Dorsolateral prefrontal cortex (tissue), 120 donors: ENCODE measurements at regions of chr1 and their contacts with region 1.

Region 1: DNA sequence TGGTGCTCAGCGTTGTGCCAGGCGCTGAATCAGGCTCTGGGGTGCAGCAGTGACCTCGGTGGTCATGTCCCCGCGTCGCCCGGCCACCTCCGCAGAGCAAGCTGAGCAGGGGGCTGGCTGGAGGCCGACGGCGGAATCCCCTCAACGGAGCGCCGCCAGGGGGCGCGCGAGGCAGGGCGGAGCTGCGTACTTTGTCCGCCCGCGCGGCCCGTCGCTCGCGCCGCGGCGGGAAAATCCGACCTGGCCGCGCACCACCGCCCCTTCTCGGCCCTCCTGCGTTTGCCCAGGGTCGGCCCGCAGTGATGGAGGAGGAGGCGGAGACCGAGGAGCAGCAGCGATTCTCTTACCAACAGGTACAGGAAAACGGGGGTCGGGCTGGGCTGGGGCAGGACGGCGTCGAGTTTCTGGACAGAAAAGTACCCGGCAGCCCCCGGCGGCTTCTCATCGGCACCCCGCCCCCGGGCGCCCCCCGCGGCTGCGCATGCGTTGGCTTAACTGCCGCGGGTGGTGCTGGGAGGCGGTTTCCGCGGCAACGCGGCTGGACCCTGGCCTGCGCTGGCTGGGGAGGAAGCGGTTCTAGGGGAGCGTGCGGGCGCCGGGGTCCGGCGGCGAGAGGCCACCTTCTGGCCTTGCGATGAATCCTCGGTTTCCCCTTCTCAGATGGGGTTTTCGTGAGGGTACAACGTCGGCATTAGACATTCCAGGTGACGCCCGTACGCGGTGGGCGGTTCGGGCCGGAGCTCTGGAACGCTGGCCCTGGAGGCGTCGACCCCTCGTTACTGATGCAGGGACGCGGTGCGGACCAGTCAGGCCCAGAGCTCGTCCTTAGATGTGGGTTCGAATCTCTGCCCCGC is at the start of gene CENPS:
- DNase-seq: peak; percentile 48 to 89 (median 79)
- H3K4me3 ChIP-seq: peak within 1 kb of the TSS; percentile 60 to 98 (median 87)
- H3K27ac ChIP-seq: peak within 1 kb of the TSS in 57 of 59 donors; percentile 26 to 90 (median 72)
- H3K27me3 ChIP-seq: no peaks in the 10 kb centered on the region
- CTCF ChIP-seq: peak; percentile 86 to 100 (median 96)
- total RNA-seq, gene CENPS: 7.2 to 24.1 (median 14.9) TPM

Region 2: DNA sequence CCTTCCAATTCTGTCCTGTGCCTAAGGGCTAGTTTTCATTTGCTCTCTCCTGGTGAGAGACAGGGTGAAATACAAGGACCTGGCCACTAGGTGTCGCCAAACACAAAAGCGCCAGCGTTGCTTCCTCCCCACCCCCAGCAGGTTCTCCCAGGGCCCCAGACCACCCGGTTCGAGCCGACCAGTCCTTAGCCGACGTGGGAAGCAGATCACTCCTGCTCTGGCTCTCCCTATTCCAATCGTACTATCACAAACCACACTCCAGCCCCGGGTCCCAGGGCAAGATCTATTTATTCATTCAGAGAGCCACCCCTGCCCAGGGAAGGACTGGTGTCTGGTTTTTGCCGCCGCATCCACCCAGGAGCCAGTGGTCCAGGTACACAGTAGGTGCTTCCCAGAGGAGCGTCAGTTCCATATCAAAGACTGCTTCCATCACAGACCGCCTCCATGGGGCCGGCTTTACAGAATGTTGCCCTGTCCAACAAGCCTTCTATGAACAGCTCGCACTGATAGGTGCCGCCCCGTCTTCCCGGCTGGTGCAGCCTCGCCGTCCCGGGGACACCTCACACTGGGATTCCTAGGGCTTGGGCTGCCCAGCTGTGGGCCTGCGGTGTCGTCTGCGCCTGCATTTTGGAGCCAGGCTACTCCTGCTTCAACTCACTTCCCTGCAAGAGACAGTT is 555.3 kb before region 1 on chr1:
- intact Hi-C with region 1: loop called (anchors 2 to 10 kb)
- DNase-seq: peak in 9 of 10 donors; percentile 55 to 82 (median 74)
- H3K4me3 ChIP-seq: peak overlapping the region in 49 of 59 donors; percentile 0 to 54 (median 40)
- H3K27ac ChIP-seq: peak overlapping the region in 53 of 59 donors; percentile 17 to 88 (median 64)
- H3K27me3 ChIP-seq: no peaks in the 10 kb centered on the region
- CTCF ChIP-seq: peak; percentile 71 to 98 (median 94)

Region 3: GRCh38 chr1:10209905-10210810 is 220.3 kb before region 1 on chr1 and contains the start of gene KIF1B:
- intact Hi-C with region 1: loop called in 1 of 2 experiments (anchors 2 kb)
- DNase-seq: peak; percentile 96 to 100 (median 98)
- H3K4me3 ChIP-seq: peak within 1 kb of the TSS; percentile 52 to 100 (median 87)
- H3K27ac ChIP-seq: peak within 1 kb of the TSS; percentile 88 to 100 (median 99)
- H3K27me3 ChIP-seq: no peaks in the 10 kb centered on the region
- CTCF ChIP-seq: peak; percentile 93 to 100 (median 98)
- total RNA-seq, gene KIF1B: 238 to 416 (median 324) TPM

Region 4: GRCh38 chr1:10295481-10296085 is 134.9 kb before region 1 on chr1:
- intact Hi-C with region 1: no loop called
- DNase-seq: peak in 9 of 10 donors; percentile 56 to 84 (median 71)
- H3K4me3 ChIP-seq: peak overlapping the region in 31 of 59 donors; percentile 1 to 51 (median 20)
- H3K27ac ChIP-seq: peak overlapping the region; percentile 4 to 96 (median 88)
- H3K27me3 ChIP-seq: no peaks in the 10 kb centered on the region
- CTCF ChIP-seq: peak in 3 of 56 donors; percentile 14 to 23 (median 14)

Region 5: DNA sequence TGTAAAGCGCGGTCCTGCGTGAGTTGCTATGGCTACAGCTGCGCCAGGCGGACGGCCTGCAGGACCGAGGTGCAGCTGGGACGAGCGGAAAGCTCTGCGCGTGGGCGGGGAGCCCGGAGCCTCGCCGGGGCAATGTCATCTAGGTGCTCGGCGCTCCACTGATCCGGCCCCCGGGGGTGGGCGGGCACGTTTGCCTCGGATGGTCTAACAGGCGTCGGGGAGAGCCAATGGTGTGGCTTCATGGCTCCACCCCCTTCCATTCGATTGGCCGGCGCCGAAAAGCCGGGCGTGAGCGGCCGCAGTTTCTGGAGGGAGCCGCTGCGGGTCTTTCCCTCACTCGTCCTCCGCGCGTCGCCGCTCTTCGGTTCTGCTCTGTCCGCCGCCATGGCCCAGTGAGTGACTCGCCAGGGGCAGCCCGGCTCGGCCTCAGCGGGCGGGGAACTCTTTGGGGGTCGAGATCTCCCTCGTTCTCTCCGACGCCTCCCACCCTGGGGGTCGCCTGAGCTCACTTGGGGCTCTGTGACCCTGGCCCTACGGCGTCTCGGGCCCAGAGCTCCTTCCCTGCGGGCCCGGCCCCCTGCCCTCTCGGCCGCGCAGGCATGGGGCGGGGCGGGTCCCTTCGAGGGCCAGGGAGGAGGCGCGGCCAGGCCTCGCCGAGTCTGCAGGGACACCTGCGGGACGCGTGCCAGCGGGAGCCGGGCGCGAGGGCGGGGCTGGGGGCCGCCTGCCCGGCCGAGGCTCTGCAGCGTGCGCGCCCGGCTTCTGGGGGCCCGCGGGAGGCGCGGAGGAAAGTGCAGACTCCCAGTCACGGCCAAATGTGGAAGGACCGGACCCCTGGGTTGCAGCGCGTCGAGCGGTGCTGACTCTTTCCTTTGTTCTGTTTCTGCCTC is 31.5 kb before region 1 on chr1 and contains the start of gene PGD:
- intact Hi-C with region 1: loop called (anchors 2 to 5 kb)
- DNase-seq: peak; percentile 98 to 99 (median 99)
- H3K4me3 ChIP-seq: peak within 1 kb of the TSS; percentile 71 to 100 (median 94)
- H3K27ac ChIP-seq: peak within 1 kb of the TSS in 57 of 59 donors; percentile 33 to 94 (median 85)
- H3K27me3 ChIP-seq: no peaks in the 10 kb centered on the region
- CTCF ChIP-seq: peak in 35 of 56 donors; percentile 4 to 57 (median 28)
- total RNA-seq, gene PGD: 47.6 to 99.3 (median 70.6) TPM

Region 6: GRCh38 chr1:10494754-10495474 is 64.5 kb after region 1 on chr1:
- intact Hi-C with region 1: loop called (anchors 2 kb)
- DNase-seq: peak; percentile 53 to 87 (median 80)
- H3K4me3 ChIP-seq: peak overlapping the region in 58 of 59 donors; percentile 11 to 63 (median 48)
- H3K27ac ChIP-seq: peak overlapping the region in 40 of 59 donors; percentile 12 to 80 (median 61)
- H3K27me3 ChIP-seq: no peaks in the 10 kb centered on the region
- CTCF ChIP-seq: peak; percentile 67 to 98 (median 91)